Ascending aorta (tissue), 2 donors: ENCODE measurements at regions of chr17 and their contacts with region 1.

Region 1: GRCh38 chr17:30278032-30278431 is 13.7 kb downstream of the BLMH start:
- DNase-seq: no peak
- H3K4me3 ChIP-seq: no peak overlapping the region
- H3K27ac ChIP-seq: no peak overlapping the region
- H3K4me1 ChIP-seq: peaks cover 0 to 3% of the 10 kb centered on the region in 2 donors
- H3K27me3 ChIP-seq: no peaks in the 10 kb centered on the region
- CTCF ChIP-seq: peak; percentile 33 to 61 (median 52)

Region 2: GRCh38 chr17:30104575-30105339 is 173.3 kb before region 1 on chr17:
- intact Hi-C with region 1: loop called (anchors 1 kb)
- DNase-seq: peak; percentile 36 to 87
- H3K4me3 ChIP-seq: peak overlapping the region; percentile 54 to 65
- H3K27ac ChIP-seq: no peak overlapping the region
- H3K4me1 ChIP-seq: no peaks in the 10 kb centered on the region
- H3K27me3 ChIP-seq: no peaks in the 10 kb centered on the region
- CTCF ChIP-seq: peak; percentile 78 to 88 (median 84)

Region 3: GRCh38 chr17:30124273-30124796 is 153.7 kb before region 1 on chr17:
- intact Hi-C with region 1: loop called (anchors 2 kb)
- DNase-seq: no peak
- H3K4me3 ChIP-seq: no peak overlapping the region
- H3K27ac ChIP-seq: no peak overlapping the region
- H3K4me1 ChIP-seq: peaks cover 0 to 2% of the 10 kb centered on the region in 2 donors
- H3K27me3 ChIP-seq: no peaks in the 10 kb centered on the region
- CTCF ChIP-seq: no peak

Region 4: GRCh38 chr17:30236766-30237165 is 41.3 kb before region 1 on chr17:
- intact Hi-C with region 1: loop called (anchors 5 kb)
- DNase-seq: peak in 1 of 2 donors; percentile 79
- H3K4me3 ChIP-seq: peak overlapping the region; percentile 0 to 76
- H3K27ac ChIP-seq: no peak overlapping the region
- H3K4me1 ChIP-seq: peaks cover 0 to 11% of the 10 kb centered on the region in 2 donors
- H3K27me3 ChIP-seq: no peaks in the 10 kb centered on the region
- CTCF ChIP-seq: peak in 2 of 3 experiments; percentile 37 to 51